ENCODE measurements at regions of chr10 and their contacts with region 1.

Region 1: DNA sequence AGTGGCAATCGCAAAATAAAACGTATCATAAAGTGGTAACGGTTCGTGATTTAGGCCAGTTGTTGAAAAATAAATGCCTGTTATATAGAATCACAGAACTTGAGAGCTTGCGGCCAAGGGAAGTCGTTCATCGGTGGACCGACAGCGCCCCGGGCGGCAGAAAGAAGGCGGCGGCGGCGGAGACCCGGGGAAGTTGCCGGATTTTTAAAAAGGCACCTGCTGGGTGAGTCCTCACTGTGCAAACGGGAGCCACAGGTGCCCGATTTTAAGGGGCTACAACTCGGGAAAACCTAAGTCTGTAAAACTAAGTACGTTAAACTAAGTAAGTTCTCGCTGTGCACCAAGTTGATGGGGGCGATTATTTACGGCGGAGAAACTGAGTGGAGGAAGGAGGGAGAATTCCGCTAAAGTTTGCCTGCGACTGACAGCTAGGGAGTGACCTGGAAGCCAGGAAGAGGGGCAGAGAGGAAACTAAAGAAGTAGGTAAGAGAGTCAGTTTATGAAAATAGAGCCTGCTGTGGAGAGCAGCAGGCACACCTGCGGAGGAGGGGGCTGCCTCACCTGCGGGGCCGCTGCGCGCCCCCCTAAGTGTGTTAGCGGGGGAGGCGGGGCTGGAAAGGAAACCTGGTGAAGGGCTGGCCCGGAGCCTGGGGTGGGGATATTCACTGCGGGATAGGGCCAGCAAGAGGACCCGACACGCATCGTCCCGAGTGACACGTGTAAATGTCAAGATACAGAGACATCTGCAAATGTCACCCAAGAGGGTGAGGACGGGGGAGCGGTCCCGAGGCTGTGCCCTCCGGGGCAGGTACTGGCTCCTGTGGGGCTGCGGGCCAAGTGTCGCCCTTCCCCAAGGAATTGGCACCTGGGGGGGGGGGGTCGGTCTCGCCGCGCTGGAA is 1.0 kb downstream of the ADAM12 start:
- DNase-seq: peak; percentile 72
- ATAC-seq: peak; percentile 67
- H3K4me3 ChIP-seq: peak overlapping the region; percentile 64
- H3K27ac ChIP-seq: no peak overlapping the region
- H3K4me1 ChIP-seq: peaks cover 9% of the 10 kb centered on the region
- H3K27me3 ChIP-seq: no peaks in the 10 kb centered on the region; the same call in 1 of the 2 replicates
- CTCF ChIP-seq: peak; percentile 93
- POLR2A ChIP-seq: peak; percentile 31; the same call in 1 of the 2 replicates
- RAD21 ChIP-seq: peak; percentile 86

Region 2: DNA sequence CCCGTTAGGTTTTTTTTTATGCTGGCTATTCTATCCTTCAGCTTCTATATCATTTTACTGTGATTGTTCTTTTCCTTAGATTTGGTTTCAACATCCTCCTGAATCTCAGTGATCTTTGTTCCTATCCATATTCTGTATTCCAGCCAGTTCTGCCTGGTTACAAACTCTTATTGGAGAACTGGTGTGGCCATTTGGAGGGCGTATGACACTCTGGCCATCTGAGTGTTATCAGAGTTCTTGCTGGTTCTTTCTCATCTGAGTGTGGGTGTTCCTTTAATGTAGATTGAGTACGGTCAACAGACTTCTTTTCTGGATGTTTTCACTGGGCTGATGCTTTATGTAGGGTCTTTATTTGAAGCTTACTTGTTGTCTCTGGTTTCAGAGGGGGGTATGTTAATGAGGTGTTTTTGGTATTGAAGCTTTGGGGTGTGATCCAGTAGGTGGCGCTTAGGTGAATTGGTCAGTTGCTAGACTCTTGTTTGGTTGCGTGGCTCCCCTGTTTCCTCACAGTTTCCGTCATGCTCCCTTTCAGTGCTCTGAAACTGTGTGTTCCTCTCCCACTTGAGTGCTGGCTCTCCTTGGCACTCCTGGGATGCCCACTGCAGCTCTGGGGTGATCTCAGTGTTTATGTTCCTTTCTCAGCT is 410.2 kb before region 1 on chr10:
- CTCF ChIA-PET with region 1: interaction called, 3 read pairs
- POLR2A ChIA-PET with region 1: no interaction called
- dilution Hi-C with region 1: no loop called
- in situ Hi-C with region 1: loop called (anchors 5 kb)
- intact Hi-C with region 1: loop called (anchors 1 kb)
- DNase-seq: no peak
- ATAC-seq: no peak
- H3K4me3 ChIP-seq: no peak overlapping the region
- H3K27ac ChIP-seq: no peak overlapping the region
- H3K4me1 ChIP-seq: 0 out of 2 replicates have a peak, but pooled peaks cover 2% of the 10 kb centered on the region
- H3K27me3 ChIP-seq: 0 out of 2 replicates have a peak, but pooled peaks cover 2% of the 10 kb centered on the region
- CTCF ChIP-seq: no peak
- POLR2A ChIP-seq: no peak
- RAD21 ChIP-seq: no peak

Region 3: DNA sequence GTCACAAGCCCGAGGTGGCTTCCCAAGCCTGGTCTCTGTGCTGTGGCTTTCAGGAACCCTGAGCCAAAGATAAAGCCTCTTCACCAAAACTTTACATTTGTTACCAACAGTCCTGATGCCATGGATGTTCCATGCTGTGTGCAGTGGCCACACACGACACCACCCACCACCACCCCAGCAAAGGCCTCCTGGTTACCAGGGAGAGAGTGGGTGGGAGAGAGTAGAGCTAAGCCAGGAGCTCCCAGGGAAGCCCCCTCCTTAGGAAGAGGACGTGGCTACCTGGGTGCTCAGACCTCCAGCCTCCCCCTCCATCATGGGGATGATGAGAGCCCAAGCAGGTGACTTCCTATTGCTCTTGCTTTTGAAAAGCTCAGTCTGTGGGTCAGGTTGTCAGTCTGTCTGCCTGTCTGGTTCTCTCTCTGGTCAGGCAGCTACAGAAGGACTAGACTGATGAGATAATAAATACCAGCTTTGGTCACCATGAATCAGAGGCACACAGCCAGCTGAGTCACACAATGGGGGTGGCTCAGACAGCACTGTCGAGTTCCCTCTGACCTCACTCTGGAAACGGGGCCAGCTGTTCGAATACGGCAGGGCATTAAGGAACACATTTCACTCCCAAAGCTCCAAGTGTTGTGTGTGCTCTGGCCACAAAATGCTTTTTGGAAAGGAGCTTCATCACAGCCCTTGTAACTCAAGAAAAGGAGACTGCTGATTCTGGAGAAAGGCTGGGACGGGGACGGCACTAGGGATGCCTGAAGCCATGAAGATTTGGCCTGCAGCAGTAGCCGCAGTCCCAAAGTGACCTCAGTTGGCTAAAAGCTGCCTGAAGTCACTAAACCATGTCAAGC is 324.9 kb before region 1 on chr10:
- CTCF ChIA-PET with region 1: no interaction called
- POLR2A ChIA-PET with region 1: no interaction called
- dilution Hi-C with region 1: no loop called
- in situ Hi-C with region 1: no loop called
- intact Hi-C with region 1: loop called (anchors 10 kb)
- DNase-seq: peak; percentile 98
- ATAC-seq: peak; percentile 81
- H3K4me3 ChIP-seq: no peak overlapping the region
- H3K27ac ChIP-seq: peak overlapping the region; percentile 10; the same call in 1 of the 2 replicates
- H3K4me1 ChIP-seq: peaks cover 29% of the 10 kb centered on the region
- H3K27me3 ChIP-seq: peaks cover 6% of the 10 kb centered on the region; the same call in 1 of the 2 replicates
- CTCF ChIP-seq: no peak
- POLR2A ChIP-seq: peak; percentile 60; the same call in 1 of the 2 replicates
- RAD21 ChIP-seq: no peak; the same call in 1 of the 2 replicates

Region 4: DNA sequence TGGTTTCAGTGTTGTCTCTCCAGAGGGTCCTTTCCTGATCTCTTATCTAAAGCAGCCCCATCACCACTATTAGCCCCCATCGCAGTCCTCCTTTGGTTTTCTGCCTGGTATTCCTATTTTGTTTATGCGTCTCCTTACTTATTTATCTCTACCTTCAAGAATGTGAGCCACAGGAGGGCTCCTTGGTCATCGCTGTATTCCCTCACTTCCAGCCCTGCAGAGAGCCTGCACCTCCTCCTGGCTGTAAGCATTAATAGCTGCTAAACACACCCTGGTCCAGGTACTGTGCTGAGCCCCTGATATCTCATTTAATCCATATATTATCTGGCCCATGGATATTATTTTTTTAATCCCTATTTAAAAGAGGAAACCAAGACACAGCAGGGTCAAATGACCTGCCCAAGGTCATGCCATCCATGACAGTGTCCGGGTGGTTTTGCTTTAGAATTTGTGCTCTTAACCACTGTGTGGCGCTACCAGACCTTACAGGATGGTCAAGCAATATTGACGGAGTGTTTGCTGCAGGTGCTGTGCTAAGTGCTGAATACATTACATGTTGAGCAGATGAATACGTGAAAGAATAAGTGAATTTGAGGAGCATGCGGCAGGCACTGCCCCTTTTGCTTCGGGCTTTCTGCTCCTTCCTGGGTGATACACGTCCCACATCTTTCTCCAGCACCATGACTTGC is 226.2 kb before region 1 on chr10:
- CTCF ChIA-PET with region 1: interaction called, 4 read pairs
- POLR2A ChIA-PET with region 1: no interaction called
- dilution Hi-C with region 1: no loop called
- in situ Hi-C with region 1: no loop called
- intact Hi-C with region 1: loop called (anchors 1 kb)
- DNase-seq: peak; percentile 37
- ATAC-seq: 0 out of 2 replicates have a peak, but pooled peaks have one; percentile 37
- H3K4me3 ChIP-seq: no peak overlapping the region
- H3K27ac ChIP-seq: no peak overlapping the region
- H3K4me1 ChIP-seq: no peaks in the 10 kb centered on the region
- H3K27me3 ChIP-seq: peaks cover 10% of the 10 kb centered on the region
- CTCF ChIP-seq: peak; percentile 43
- POLR2A ChIP-seq: no peak
- RAD21 ChIP-seq: peak; percentile 60

Region 5: GRCh38 chr10:126252884-126253618 is 134.2 kb before region 1 on chr10:
- CTCF ChIA-PET with region 1: interaction called, 3 read pairs
- POLR2A ChIA-PET with region 1: no interaction called
- dilution Hi-C with region 1: no loop called
- in situ Hi-C with region 1: no loop called
- intact Hi-C with region 1: loop called (anchors 5 kb)
- DNase-seq: peak; percentile 100
- ATAC-seq: peak; percentile 87
- H3K4me3 ChIP-seq: no peak overlapping the region
- H3K27ac ChIP-seq: peak overlapping the region; percentile 68
- H3K4me1 ChIP-seq: peaks cover 19% of the 10 kb centered on the region
- H3K27me3 ChIP-seq: no peaks in the 10 kb centered on the region
- CTCF ChIP-seq: no peak
- POLR2A ChIP-seq: no peak; the same call in 1 of the 2 replicates
- RAD21 ChIP-seq: peak; percentile 23; the same call in 1 of the 2 replicates

Region 6: GRCh38 chr10:126549344-126549743 is 162.1 kb after region 1 on chr10:
- CTCF ChIA-PET with region 1: no interaction called
- POLR2A ChIA-PET with region 1: no interaction called
- dilution Hi-C with region 1: no loop called
- in situ Hi-C with region 1: no loop called
- intact Hi-C with region 1: no loop called
- DNase-seq: no peak
- ATAC-seq: no peak
- H3K4me3 ChIP-seq: no peak overlapping the region
- H3K27ac ChIP-seq: no peak overlapping the region
- H3K4me1 ChIP-seq: no peaks in the 10 kb centered on the region
- H3K27me3 ChIP-seq: peaks cover 3% of the 10 kb centered on the region; the same call in 1 of the 2 replicates
- CTCF ChIP-seq: no peak
- POLR2A ChIP-seq: no peak
- RAD21 ChIP-seq: no peak

Region 7: DNA sequence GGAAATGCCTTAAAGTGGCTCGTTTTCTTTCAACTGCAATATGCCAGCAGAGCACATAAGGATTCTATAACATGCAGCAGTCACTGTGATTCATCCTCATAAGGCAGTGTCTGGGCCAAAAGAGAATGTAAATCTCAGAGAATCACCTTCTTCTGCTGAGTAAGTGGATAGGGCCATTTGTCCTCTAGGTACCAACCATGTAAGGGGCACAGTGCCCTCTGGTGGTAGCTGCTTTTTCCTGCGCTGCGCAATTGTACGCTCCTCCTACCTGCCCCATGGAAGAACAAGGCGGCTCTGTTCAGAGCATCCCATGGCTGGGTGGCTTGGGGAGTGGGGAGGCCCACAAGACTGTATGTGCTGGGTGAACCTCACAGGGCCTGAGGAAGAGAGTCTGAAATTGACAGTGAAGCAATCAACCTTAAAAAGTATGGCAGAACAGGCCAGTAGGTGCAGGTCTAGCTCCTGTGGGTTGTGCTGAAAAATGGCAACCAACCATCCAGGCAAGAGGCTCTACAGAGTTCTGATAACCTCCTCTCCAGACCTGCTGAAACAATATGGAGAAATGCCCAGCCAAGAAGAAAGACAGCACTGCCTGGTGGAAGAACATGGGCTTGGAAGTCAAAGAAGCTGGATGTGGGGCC is 361.9 kb after region 1 on chr10:
- CTCF ChIA-PET with region 1: no interaction called
- POLR2A ChIA-PET with region 1: no interaction called
- dilution Hi-C with region 1: no loop called
- in situ Hi-C with region 1: no loop called
- intact Hi-C with region 1: loop called (anchors 5 kb)
- DNase-seq: peak; percentile 75
- ATAC-seq: peak; percentile 99
- H3K4me3 ChIP-seq: no peak overlapping the region
- H3K27ac ChIP-seq: no peak overlapping the region
- H3K4me1 ChIP-seq: no peaks in the 10 kb centered on the region
- H3K27me3 ChIP-seq: no peaks in the 10 kb centered on the region
- CTCF ChIP-seq: peak; percentile 75
- POLR2A ChIP-seq: no peak
- RAD21 ChIP-seq: peak; percentile 78